ENCODE measurements at regions of chr4 and their contacts with region 1.

Region 1: GRCh38 chr4:98143001-98143899 is at the start of gene STPG2:
- DNase-seq: peak; percentile 96
- H3K4me3 Mint-ChIP-seq: peak within 1 kb of the TSS; percentile 91
- H3K27ac Mint-ChIP-seq: peak within 1 kb of the TSS; percentile 95
- H3K4me1 Mint-ChIP-seq: peaks cover 15% of the 10 kb centered on the region
- H3K27me3 Mint-ChIP-seq: no peaks in the 10 kb centered on the region
- CTCF ChIP-seq: peak; percentile 21
- total RNA-seq, gene STPG2: 0.22 and 0.61 TPM in 2 replicates

Region 2: GRCh38 chr4:97504713-97505361 is 638.4 kb before region 1 on chr4:
- CTCF ChIA-PET with region 1: no interaction called
- POLR2A ChIA-PET with region 1: no interaction called
- intact Hi-C with region 1: no loop called
- DNase-seq: no peak
- H3K4me3 Mint-ChIP-seq: no peak overlapping the region
- H3K27ac Mint-ChIP-seq: no peak overlapping the region
- H3K4me1 Mint-ChIP-seq: no peaks in the 10 kb centered on the region
- H3K27me3 Mint-ChIP-seq: no peaks in the 10 kb centered on the region
- CTCF ChIP-seq: no peak

Region 3: DNA sequence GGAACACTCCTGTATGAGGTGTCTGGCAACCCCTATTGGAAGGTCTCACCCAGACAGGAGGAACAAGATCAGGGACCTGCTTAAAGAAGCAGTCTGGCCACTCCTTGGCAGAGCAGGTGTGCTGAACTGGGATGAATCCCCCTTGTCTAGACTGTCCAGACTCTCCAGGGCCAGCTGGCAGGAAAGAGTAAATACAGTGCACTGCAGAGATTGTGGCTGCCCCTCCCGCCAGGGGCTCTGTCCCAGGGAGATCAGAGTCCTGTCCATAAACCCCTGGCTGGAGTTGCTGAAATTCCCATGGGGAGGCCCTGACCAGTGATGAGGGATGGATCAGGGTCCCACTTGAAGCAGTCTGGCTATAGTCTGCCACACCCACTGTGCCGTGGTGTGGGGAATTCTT is 17.7 kb before region 1 on chr4:
- CTCF ChIA-PET with region 1: interaction called, 4 read pairs
- POLR2A ChIA-PET with region 1: interaction called, 15 read pairs
- intact Hi-C with region 1: no loop called
- DNase-seq: no peak
- H3K4me3 Mint-ChIP-seq: no peak overlapping the region
- H3K27ac Mint-ChIP-seq: no peak overlapping the region
- H3K4me1 Mint-ChIP-seq: no peaks in the 10 kb centered on the region
- H3K27me3 Mint-ChIP-seq: no peaks in the 10 kb centered on the region
- CTCF ChIP-seq: no peak

Region 4: GRCh38 chr4:98166025-98166730 is 22.9 kb after region 1 on chr4:
- CTCF ChIA-PET with region 1: no interaction called
- POLR2A ChIA-PET with region 1: interaction called, 17 read pairs
- intact Hi-C with region 1: no loop called
- DNase-seq: peak; percentile 93
- H3K4me3 Mint-ChIP-seq: no peak overlapping the region
- H3K27ac Mint-ChIP-seq: peak overlapping the region; percentile 35
- H3K4me1 Mint-ChIP-seq: peaks cover 9% of the 10 kb centered on the region
- H3K27me3 Mint-ChIP-seq: no peaks in the 10 kb centered on the region
- CTCF ChIP-seq: no peak

Region 5: DNA sequence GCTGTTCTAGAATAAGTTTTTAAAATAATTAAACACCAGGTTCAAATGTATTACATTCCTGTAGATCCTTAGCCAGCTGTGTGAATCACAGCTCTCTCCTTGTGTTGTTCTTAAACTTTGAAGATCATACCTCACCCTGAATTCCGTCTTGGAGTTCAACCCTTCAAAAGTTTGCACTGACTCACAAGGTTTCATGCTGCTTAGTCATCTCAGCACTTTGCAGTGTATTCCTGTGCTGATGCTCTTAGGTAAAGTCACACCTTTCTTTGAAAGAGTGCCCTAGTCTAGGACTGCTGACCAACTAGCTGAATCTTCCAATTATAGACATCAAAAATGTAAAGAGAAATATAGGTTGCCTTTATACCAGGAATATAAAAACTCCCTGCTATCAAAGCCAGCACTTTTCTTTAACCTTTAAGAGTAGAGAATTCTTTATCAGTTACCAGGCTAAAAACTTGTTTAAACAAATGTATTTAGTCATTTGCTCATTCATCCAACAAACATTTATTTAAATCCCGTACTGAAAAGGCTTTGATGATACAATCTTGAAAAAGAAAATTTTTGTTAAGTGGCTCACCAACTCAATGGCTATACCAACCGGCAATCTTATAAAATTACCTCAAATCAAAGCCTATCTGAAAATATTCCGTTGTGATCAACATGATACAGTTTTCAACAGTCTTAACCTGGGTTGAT is 287.6 kb after region 1 on chr4:
- CTCF ChIA-PET with region 1: no interaction called
- POLR2A ChIA-PET with region 1: interaction called, 14 read pairs
- intact Hi-C with region 1: no loop called
- DNase-seq: peak; percentile 89
- H3K4me3 Mint-ChIP-seq: no peak overlapping the region
- H3K27ac Mint-ChIP-seq: peak overlapping the region; percentile 73
- H3K4me1 Mint-ChIP-seq: peaks cover 17% of the 10 kb centered on the region
- H3K27me3 Mint-ChIP-seq: no peaks in the 10 kb centered on the region
- CTCF ChIP-seq: no peak

Region 6: GRCh38 chr4:98658287-98659105 is 515.2 kb after region 1 on chr4 and contains the start of gene TSPAN5:
- CTCF ChIA-PET with region 1: no interaction called
- POLR2A ChIA-PET with region 1: interaction called, 10 read pairs
- intact Hi-C with region 1: no loop called
- DNase-seq: peak; percentile 74
- H3K4me3 Mint-ChIP-seq: peak within 1 kb of the TSS; percentile 81
- H3K27ac Mint-ChIP-seq: no peak within 1 kb of the TSS
- H3K4me1 Mint-ChIP-seq: peaks cover 50% of the 10 kb centered on the region
- H3K27me3 Mint-ChIP-seq: no peaks in the 10 kb centered on the region
- CTCF ChIP-seq: no peak
- total RNA-seq, gene TSPAN5: 18.5 and 19.8 TPM in 2 replicates

Measured in MCF 10A (cell line).